Ovary (tissue), 10 donors: ENCODE measurements at regions of chr13 and their contacts with region 1.

Region 1: DNA sequence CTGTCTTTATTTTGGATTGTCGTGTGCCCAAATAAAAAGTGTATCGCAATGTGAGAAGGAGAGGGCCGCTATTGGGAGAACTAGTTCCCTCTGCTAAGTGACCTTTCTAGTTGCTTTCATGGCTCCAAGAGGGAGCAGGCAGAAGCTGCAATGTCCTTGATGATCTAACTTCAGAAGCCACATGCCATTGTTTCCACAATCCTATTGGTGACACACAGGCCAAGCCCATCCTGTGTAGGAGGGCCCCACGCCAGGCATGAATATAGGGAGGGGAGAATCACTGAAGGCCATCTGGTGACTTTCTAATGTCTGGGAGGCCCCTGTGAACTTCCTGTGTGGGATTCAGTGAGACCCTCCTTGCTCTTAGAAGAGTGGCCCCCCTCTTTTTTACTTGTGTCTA is 47.8 kb upstream of the KPNA3 start:
- DNase-seq: no peak
- H3K4me3 ChIP-seq: no peak overlapping the region
- H3K27ac ChIP-seq: no peak overlapping the region
- H3K4me1 ChIP-seq: no peaks in the 10 kb centered on the region
- H3K27me3 ChIP-seq: no peaks in the 10 kb centered on the region
- CTCF ChIP-seq: no peak
- EP300 ChIP-seq: no peak
- POLR2A ChIP-seq: no peak

Region 2: GRCh38 chr13:49540552-49540951 is 299.7 kb before region 1 on chr13:
- intact Hi-C with region 1: no loop called
- DNase-seq: peak in 1 of 5 donors; percentile 46
- H3K4me3 ChIP-seq: no peak overlapping the region
- H3K27ac ChIP-seq: no peak overlapping the region
- H3K4me1 ChIP-seq: peaks cover 1% of the 10 kb centered on the region
- H3K27me3 ChIP-seq: no peaks in the 10 kb centered on the region
- CTCF ChIP-seq: no peak
- EP300 ChIP-seq: no peak
- POLR2A ChIP-seq: no peak

Region 3: DNA sequence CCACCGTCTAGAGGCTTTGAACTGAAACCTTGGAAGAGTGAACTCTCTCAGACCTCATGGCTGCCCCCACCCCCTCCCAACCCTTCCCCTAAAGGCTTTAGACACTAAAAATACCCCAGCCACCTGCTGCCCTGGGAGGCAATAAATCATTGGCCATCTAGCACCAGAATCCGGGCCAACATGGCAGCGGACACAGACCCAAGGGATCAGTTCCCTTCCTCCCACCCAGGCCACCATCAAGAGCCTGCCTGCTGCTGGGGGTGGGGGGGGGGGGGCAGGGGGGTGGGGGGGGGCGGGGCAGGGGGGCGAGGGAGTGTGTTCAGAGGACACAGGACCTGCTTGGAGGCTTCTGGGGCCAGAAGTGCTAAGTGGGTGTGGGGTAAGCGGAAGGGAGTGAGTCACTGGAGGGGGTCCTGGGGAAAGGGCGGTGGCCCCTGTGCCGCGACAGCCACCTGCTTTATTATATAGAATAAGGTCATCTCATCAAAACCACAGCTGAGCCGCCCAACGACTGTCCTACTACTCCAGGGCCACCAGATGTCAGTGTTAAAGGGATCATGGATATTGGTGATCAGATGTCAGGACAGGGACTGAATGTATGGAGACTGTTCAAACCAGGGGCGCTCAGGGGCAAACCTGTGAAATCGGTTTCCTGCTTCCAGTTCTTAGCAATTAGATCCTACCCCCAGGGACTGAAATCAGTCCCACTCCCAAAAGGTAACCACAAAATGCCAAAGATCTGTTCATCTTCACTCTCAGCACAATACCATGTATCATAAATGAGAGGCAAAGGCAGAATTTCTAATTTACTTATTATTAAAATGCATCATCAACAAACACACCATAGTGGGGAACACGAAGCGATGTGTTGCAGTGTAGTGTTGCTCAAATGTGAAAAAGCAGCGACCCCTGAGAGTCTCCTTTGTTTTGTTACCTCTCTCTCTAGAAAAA is 187.6 kb before region 1 on chr13:
- intact Hi-C with region 1: loop called in 2 of 4 experiments (anchors 5 to 10 kb)
- DNase-seq: no peak
- H3K4me3 ChIP-seq: no peak overlapping the region
- H3K27ac ChIP-seq: no peak overlapping the region
- H3K4me1 ChIP-seq: peaks cover 1% of the 10 kb centered on the region
- H3K27me3 ChIP-seq: no peaks in the 10 kb centered on the region
- CTCF ChIP-seq: no peak
- EP300 ChIP-seq: no peak
- POLR2A ChIP-seq: no peak

Region 4: GRCh38 chr13:49669735-49670309 is 170.4 kb before region 1 on chr13:
- intact Hi-C with region 1: loop called in 3 of 4 experiments (anchors 5 to 10 kb)
- DNase-seq: peak; percentile 31 to 61 (median 56)
- H3K4me3 ChIP-seq: no peak overlapping the region
- H3K27ac ChIP-seq: no peak overlapping the region
- H3K4me1 ChIP-seq: no peaks in the 10 kb centered on the region
- H3K27me3 ChIP-seq: no peaks in the 10 kb centered on the region
- CTCF ChIP-seq: peak; percentile 43 to 48 (median 44)
- EP300 ChIP-seq: no peak
- POLR2A ChIP-seq: no peak

Region 5: GRCh38 chr13:50106559-50106958 is 266.3 kb after region 1 on chr13:
- intact Hi-C with region 1: no loop called
- DNase-seq: no peak
- H3K4me3 ChIP-seq: no peak overlapping the region
- H3K27ac ChIP-seq: no peak overlapping the region
- H3K4me1 ChIP-seq: no peaks in the 10 kb centered on the region
- H3K27me3 ChIP-seq: no peaks in the 10 kb centered on the region
- CTCF ChIP-seq: no peak
- EP300 ChIP-seq: no peak
- POLR2A ChIP-seq: no peak

Region 6: DNA sequence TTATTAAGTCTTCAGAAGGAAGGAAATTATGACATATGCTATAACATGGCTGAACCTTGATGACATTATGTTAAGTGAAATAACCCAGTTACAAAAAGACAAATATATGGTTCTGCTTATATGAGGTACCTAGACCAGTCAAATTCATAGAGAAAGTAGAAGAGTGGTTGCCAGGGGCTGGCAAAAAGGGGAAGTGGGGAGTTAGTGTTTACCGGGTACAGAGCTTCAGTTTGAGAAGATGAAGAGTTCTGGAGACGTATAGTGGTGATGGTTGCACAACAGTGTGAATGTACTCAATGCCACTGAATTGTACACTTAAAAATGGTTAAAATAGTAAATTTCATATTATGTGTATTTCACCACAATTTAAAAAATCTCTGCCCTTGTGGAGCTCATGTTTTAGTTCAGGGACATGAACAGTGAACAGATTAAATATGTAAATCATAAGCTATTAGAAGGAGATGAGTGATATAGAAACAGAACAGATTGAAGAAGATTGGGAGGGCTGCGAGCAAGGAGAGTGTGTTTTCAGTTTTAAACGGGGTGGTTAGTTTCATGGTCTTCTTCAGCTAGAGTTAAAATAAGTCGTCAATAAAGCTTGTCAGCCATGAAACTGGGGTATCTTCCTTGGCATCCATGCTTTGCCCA is 530.2 kb after region 1 on chr13:
- intact Hi-C with region 1: no loop called
- DNase-seq: no peak
- H3K4me3 ChIP-seq: no peak overlapping the region
- H3K27ac ChIP-seq: no peak overlapping the region
- H3K4me1 ChIP-seq: no peaks in the 10 kb centered on the region
- H3K27me3 ChIP-seq: no peaks in the 10 kb centered on the region
- CTCF ChIP-seq: no peak
- EP300 ChIP-seq: no peak
- POLR2A ChIP-seq: no peak